ENCODE measurements at regions of chr7 and their contacts with region 1.

Region 1: DNA sequence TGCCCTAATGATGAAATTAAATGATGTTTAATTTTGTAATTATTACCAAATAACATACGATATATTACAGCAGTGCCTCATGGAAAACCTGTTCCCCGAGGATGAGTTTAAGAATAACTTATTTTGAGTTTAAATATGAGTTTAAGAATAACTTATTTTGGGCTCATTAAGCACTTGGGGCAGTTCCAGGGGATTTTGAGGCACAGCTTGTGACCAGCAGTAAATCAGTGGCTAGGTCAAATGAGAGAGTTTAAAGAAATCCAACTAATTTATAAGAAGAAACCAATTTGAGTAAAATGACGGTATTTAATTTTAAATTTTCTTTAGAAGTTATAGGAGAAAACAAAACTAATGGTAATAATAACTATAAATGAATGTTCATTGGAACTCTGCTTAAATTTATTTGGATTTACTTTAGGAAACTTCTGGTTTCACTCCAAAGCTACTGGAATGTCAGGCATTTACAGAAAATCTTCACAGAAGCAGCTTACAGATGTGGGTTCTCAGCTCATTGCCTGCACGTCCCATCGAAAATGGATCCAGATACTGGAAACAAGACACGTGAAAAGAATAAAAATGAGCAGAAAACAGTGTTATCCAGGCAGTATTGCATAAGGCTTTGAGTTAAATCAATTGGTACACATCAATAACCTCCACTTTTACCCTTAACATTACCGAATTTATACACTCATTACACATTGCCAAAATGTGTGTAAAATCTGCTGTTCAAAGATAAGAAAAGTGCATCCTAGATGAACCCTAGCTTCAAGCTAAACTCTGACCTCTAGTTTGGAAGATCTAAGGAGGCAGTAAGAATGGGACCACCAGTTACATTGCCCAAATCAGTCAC is 784.6 kb upstream of the IGFBP3 start:
- DNase-seq: no peak
- ATAC-seq: no peak

Region 2: GRCh38 chr7:45881759-45882464 is 823.7 kb before region 1 on chr7:
- intact Hi-C with region 1: no loop called
- DNase-seq: no peak
- ATAC-seq: no peak

Region 3: DNA sequence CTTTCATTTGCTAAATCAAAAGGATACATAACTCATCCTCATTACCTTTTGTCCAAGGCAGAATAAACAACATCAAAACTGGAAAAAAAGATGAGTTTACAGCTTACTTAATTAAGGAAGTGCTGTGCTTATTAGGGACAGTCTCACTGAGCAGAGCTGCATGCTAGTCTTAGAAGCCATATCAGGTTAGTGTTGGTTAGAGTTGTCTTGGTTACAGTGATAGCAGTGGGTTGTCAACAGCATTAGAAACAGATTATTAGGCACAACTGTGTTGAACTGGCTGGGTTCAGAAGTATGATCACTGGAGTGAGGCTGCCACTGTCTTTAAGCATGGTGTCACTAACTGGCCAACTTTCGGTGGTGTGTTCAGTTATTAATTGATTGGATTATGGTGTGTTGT is 280.7 kb before region 1 on chr7:
- intact Hi-C with region 1: no loop called
- DNase-seq: no peak
- ATAC-seq: no peak

Region 4: DNA sequence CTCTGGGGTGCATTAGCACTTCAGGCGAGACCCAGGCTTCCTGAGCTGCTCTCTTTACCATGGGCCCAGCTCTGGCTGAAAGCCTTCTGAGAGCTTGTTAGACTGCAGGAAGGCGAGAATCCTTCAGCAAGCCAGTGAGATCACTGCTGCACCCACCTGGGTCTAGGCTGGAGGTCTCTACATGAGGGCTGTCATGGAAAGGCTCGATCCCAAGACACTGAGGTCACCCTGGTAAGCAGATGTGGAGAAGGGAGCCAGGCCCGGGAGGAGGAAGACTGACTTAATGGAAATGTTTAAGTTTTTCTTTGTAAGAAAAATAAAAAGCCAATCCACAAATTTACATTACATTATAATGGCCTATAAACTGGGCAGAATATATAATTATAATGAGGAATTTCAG is 191.8 kb after region 1 on chr7:
- intact Hi-C with region 1: no loop called
- DNase-seq: no peak
- ATAC-seq: no peak

Region 5: DNA sequence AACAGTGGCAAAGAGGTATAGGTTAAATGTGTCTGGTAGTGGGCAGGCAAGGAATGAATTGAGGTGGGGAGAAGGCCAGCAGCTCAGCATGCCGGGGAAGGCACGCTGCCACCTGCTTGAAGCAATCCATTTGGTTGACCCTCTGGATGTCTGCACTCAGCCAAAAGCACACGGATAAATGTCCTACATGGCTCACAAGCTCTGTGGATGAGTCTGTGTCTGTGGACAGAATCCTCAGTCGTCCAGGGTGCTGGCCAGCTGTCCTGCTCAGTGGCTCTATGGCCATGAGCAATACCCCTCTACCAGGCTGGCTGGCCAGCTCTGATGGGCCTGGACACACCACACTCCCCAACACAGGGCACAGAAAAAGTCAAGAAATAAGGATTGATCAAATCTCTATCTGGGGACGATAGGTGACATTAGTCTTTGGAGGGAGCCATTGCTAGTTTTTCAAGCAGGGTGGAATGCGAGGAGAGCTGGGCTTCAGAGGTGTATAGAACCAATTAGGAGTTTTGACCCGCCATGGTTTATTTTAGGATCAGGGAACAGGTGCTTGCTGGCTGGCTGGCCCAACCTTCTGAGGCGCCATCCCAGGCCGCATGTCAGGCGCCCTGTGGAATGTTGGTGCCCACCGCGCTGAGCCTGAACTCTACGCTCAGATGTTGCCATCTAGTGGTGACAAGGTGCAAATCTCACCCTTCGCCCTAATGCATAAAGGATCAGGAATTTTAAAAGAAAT is 382.9 kb after region 1 on chr7:
- intact Hi-C with region 1: loop called (anchors 10 kb)
- DNase-seq: peak; percentile 72
- ATAC-seq: peak; percentile 94

Region 6: GRCh38 chr7:47418601-47419381 is 713.2 kb after region 1 on chr7:
- intact Hi-C with region 1: no loop called
- DNase-seq: no peak
- ATAC-seq: no peak

Measured in Right ventricle myocardium superior (tissue), 1 donor.